ENCODE measurements at regions of chr9 and their contacts with region 1.

Region 1: DNA sequence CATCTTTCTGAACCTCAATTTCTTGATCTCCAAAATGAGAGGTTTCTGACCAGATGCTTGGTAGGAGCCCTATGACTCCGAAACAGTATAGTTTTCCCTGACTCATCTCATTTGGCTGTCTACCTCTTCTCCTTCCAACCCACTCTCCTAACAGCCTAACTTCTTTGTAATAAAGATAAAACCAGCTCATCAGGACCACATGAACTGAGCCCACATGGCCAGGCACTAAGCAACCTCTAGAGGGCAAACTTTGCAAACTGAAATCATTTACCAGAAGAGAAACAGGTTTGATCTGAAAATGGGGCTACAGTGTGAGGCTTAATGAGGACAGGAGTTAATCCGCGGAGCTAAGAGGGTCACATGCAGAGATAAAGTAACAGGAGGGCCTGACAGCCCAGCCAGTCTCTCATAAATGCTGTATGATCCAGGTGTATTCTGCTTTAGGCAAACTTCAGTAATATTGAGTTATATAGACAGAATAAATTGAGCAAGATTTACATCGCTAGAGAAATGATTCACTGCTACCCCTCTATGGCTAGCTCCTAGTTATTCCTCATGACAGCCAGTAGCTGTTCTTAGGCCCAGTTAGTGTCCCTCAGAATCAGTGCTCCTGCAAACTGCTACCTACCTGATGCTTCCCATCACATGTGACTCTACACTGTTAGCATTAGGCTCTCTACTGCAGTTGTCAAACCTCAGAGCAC is 64.6 kb downstream of the ABCA1 start:
- DNase-seq: no peak

Region 2: DNA sequence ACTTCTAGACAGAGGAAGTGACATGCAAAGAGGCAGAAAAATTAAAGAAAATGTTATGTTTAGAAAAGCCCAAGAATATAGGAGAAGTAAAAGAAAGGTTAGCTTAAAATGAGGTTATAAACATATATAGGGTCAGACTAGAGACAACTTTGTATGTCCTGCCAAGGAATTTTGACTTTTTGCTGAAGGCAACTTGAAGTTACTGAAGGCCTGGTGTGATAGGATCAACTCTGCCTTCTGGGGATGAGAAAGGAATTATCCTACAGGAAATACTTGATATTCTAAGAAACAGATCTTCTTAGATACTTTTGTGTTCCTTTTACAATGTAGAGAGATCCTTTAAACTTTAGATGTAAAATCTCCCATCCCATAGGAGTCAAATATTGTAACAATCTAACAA is 681.4 kb before region 1 on chr9:
- intact Hi-C with region 1: no loop called
- DNase-seq: no peak

Region 3: DNA sequence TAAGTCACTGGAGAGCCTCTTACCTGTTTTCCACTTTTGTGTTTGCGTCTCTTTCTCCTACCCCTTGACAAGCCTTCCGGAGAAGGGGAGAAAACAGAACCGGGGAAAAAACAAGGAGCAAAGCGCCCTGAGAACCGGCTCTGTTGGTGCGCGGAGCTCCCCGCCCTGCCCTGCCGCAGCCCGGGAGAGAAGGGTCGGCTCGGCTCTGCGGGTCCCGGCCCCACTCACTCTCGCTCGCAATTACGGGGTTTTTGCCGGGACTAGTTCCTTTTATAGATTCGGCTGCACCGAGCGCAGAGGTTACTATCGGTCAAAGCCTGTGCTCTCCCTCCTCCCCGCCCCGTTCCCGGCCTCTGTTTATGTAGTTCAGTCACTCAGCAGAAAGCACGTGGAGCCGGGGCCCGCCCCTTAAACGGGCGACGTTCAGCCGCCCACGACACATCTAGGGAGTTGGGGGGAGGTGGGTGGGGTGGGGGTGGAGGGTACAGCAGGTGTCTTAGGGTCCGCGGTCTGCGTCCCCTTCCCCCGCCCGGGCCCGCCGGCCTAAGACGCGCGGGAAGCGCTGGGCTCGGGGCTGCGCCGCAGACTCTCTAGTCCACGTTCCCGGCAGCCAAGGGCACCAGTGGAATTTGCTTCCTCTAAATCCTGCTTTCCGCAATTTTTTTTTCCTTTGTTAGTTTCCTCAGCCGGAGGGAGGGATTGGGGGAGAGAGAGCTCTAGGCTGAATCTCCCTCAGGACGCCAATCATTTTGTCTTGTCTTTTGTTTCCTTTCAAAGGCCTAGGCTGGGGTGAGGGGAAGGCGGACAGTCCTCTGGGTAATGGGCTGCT is 64.8 kb after region 1 on chr9 and contains the start of gene ABCA1:
- intact Hi-C with region 1: loop called (anchors 5 kb)
- DNase-seq: peak; percentile 94
- total RNA-seq, gene ABCA1: 5.4 TPM

Region 4: GRCh38 chr9:105007143-105007542 is 143.8 kb after region 1 on chr9:
- intact Hi-C with region 1: no loop called
- DNase-seq: no peak

Region 5: GRCh38 chr9:105030285-105030684 is 167.0 kb after region 1 on chr9:
- intact Hi-C with region 1: no loop called
- DNase-seq: no peak

Region 6: DNA sequence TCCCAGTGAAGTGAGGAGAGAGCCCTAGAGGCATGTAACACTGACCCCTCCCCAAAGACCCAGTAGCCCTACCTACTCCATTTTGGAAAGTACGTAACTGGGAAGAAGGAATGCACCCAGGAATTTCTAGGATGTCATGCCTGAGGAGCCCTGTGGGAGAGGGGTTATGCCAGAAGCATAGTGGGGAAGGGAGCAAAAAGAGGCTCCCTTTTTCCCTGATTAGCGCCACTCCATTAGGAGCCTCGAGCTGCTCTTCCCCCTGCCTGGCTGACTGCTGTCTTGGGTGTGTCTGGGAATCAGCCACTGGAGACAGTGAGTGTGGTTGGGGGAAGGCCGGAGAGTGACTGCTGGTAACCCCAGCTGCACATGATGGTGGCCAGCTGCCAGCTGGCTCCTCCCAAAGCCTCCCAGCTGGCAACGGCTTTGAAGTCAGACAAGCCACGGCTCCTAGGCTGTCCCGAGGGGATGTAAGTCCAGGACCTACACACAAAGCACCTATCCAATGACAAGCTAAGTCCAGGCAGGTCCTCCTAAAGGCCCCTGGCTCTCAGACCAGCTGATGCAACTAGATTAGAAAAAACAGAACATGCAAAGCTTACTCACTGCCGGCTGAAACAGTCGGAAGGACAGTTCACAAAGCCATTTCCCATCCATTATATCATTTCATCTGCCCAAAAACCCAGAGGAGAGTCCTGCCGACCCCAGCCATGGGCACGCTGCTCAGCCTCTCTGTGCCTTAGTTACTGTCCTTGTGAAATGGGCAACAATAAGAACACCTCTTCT is 201.2 kb after region 1 on chr9:
- intact Hi-C with region 1: loop called (anchors 10 kb)
- DNase-seq: peak; percentile 93

Region 7: GRCh38 chr9:105157130-105157583 is 293.8 kb after region 1 on chr9:
- intact Hi-C with region 1: loop called (anchors 2 kb)
- DNase-seq: peak; percentile 76

Region 8: DNA sequence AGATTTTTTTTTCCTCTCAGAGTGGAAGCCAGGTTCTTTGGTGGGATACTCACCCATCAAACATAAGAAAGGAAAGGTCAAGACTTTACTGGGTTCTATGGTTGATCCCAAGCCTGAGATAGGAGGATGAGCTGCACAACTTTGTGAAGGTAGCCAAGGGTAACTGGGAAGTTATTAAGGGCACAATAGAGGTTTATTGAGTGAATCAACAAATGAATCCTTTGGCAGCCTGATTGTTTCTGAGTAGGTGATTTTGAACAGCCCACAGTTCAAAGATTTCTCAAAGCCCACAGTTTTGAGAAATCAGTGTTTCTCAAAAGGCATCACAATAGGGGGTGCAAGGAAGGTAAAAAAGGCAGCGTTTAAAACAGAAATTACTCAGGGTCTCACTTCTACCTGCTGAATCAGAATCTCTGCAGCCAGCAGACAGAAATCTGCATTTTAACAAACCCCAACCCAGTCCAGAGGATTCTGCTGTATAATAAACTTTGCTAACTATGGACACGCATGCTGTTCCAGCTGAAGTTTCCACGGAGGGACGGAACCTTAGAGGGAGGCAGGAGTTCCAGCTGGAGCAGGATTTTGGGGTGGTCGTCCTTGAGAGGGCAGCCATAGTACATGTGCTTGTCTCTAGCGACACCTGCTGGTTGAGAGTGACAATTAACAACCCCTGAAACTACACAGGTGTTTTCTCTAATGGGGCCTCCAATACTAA is 551.8 kb after region 1 on chr9:
- intact Hi-C with region 1: loop called (anchors 5 kb)
- DNase-seq: no peak